Activated CD8-positive, alpha-beta T cell treated with anti-CD3 and anti-CD28 coated beads for 36 hours (primary cell): ENCODE measurements at regions of chr21 and their contacts with region 1.

Region 1: GRCh38 chr21:22056904-22057303 is 1058.7 kb downstream of the NCAM2 start:
- DNase-seq: no peak
- ATAC-seq: no peak
- H3K4me3 Mint-ChIP-seq: no peak overlapping the region
- H3K27ac Mint-ChIP-seq: no peak overlapping the region
- H3K4me1 Mint-ChIP-seq: no peaks in the 10 kb centered on the region
- H3K27me3 Mint-ChIP-seq: no peaks in the 10 kb centered on the region
- CTCF ChIP-seq: no peak

Region 2: DNA sequence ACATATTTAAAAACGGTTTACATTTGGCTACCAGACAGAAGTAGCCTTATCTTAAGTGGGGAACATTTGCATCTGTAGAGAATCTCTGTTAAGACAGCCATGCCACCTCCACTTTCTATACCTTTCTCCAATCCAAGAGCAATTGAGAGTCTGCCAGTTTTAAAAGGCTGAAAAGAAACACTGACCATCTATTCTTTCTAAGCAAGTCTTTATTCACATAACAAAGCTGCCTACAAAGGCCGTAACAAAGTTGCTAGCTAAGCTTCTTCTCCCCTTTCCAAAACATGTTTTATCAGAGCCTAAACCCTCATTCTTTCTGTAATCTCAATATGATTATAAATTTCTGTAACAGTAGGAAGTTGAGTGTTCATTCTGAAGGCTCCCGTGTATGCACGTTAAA is 19.6 kb after region 1 on chr21:
- CTCF ChIA-PET with region 1: no interaction called
- POLR2A ChIA-PET with region 1: no interaction called
- intact Hi-C with region 1: no loop called
- DNase-seq: no peak
- ATAC-seq: no peak
- H3K4me3 Mint-ChIP-seq: no peak overlapping the region
- H3K27ac Mint-ChIP-seq: no peak overlapping the region
- H3K4me1 Mint-ChIP-seq: no peaks in the 10 kb centered on the region
- H3K27me3 Mint-ChIP-seq: no peaks in the 10 kb centered on the region
- CTCF ChIP-seq: no peak

Region 3: DNA sequence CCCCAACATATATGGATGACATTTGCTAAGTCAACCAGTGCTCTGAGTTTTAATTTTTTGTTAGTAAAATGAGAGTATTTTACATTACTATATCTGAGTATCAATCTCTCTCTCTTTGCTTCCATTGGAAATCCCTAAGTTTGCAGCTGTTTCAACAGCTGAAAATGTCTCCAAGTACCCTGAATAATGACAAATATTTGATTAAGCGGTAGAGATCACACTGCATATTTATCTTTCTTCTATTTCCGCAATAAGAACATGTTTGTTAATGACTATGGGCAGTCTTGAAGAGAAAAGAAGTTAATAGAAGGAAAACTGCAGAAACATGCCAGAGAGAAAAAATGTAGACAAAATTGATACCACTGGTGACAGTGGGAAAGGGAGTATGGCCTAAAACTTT is 58.8 kb after region 1 on chr21:
- CTCF ChIA-PET with region 1: no interaction called
- POLR2A ChIA-PET with region 1: no interaction called
- intact Hi-C with region 1: loop called (anchors 10 kb)
- DNase-seq: no peak
- ATAC-seq: no peak
- H3K4me3 Mint-ChIP-seq: no peak overlapping the region
- H3K27ac Mint-ChIP-seq: no peak overlapping the region
- H3K4me1 Mint-ChIP-seq: no peaks in the 10 kb centered on the region
- H3K27me3 Mint-ChIP-seq: no peaks in the 10 kb centered on the region
- CTCF ChIP-seq: no peak